Naive thymus-derived CD4-positive, alpha-beta T cell (primary cell): ENCODE measurements at regions of chr7 and their contacts with region 1.

Region 1: DNA sequence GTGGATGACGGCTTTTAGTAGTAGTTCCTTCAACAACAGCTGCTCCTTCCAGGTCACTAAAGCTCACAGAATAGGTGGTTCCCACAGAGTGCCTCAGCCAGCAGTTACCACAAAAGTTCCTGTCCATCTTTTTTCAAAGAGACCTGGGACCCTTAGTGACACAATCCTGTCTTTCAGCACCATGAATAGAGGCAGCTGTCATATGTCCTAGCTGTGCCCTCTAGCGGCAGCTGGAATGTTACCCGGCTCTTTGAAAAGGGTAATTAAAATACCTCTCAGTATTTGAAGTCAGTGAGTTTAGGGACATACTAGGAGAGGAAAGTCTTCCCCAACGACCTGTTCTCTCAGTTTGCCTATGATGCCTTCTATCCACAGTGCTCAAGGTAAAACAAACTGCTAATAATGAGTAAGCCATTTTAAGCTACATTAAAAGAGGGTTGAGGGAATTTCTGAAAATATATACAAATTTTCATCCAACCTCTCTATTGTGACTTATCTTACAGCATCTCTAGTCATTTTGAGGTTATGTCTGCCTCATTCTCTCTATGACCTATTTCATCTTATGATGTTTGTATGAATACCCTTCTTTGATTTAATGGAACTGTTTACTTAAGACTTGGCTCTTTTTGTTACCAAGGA is 290.8 kb downstream of the NXPH1 start:
- DNase-seq: no peak
- ATAC-seq: no peak
- H3K4me3 ChIP-seq: no peak overlapping the region
- H3K4me3 Mint-ChIP-seq: no peak overlapping the region
- H3K27ac ChIP-seq: no peak overlapping the region
- H3K27ac Mint-ChIP-seq: no peak overlapping the region
- H3K4me1 ChIP-seq: no peaks in the 10 kb centered on the region
- H3K4me1 Mint-ChIP-seq: no peaks in the 10 kb centered on the region
- H3K27me3 ChIP-seq: no peaks in the 10 kb centered on the region
- H3K27me3 Mint-ChIP-seq: no peaks in the 10 kb centered on the region

Region 2: DNA sequence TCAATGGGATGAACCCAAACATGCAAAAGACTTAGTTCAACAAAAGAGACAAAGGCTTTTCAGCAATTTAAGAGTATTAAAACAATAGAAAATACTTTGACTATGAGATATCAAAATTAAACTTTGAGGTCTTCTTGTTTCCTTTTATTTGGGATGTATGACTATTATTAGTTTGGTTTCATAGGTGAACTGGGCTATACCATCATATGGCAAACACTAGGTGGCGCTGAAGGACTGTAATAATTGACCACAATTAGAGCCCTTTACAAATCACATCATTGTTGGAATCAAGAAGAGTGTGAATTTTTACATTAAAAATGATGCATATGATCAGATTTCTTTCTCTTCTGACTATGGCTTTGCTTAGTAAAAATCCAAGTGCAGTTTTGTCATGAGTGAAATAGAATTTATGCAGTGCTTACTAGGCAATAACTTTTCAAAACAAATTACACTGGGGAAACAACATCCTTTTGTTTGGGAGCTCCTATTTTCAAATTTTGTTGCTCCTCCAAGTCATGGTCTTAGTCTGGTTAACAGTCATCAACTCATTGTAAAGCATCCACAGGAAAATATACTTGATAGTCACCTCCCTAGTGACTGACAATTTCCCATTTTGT is 305.5 kb before region 1 on chr7:
- CTCF ChIA-PET with region 1: no interaction called
- POLR2A ChIA-PET with region 1: no interaction called
- intact Hi-C with region 1: loop called in 1 of 2 experiments (anchors 1 kb)
- DNase-seq: peak in 6 of 9 donors; percentile 24 to 45 (median 36)
- ATAC-seq: peak; percentile 66
- H3K4me3 ChIP-seq: no peak overlapping the region
- H3K4me3 Mint-ChIP-seq: no peak overlapping the region
- H3K27ac ChIP-seq: no peak overlapping the region
- H3K27ac Mint-ChIP-seq: no peak overlapping the region
- H3K4me1 ChIP-seq: no peaks in the 10 kb centered on the region
- H3K4me1 Mint-ChIP-seq: no peaks in the 10 kb centered on the region
- H3K27me3 ChIP-seq: no peaks in the 10 kb centered on the region
- H3K27me3 Mint-ChIP-seq: peaks cover 3 to 18% (median 5%) of the 10 kb centered on the region in 5 donors

Region 3: GRCh38 chr7:8739837-8740236 is 15.6 kb after region 1 on chr7:
- CTCF ChIA-PET with region 1: no interaction called
- POLR2A ChIA-PET with region 1: no interaction called
- intact Hi-C with region 1: no loop called
- DNase-seq: no peak
- ATAC-seq: no peak
- H3K4me3 ChIP-seq: no peak overlapping the region
- H3K4me3 Mint-ChIP-seq: no peak overlapping the region
- H3K27ac ChIP-seq: no peak overlapping the region
- H3K27ac Mint-ChIP-seq: no peak overlapping the region
- H3K4me1 ChIP-seq: no peaks in the 10 kb centered on the region
- H3K4me1 Mint-ChIP-seq: no peaks in the 10 kb centered on the region
- H3K27me3 ChIP-seq: no peaks in the 10 kb centered on the region
- H3K27me3 Mint-ChIP-seq: no peaks in the 10 kb centered on the region